CD8-positive, alpha-beta T cell (primary cell): ENCODE measurements at regions of chr17 and their contacts with region 1.

Region 1: DNA sequence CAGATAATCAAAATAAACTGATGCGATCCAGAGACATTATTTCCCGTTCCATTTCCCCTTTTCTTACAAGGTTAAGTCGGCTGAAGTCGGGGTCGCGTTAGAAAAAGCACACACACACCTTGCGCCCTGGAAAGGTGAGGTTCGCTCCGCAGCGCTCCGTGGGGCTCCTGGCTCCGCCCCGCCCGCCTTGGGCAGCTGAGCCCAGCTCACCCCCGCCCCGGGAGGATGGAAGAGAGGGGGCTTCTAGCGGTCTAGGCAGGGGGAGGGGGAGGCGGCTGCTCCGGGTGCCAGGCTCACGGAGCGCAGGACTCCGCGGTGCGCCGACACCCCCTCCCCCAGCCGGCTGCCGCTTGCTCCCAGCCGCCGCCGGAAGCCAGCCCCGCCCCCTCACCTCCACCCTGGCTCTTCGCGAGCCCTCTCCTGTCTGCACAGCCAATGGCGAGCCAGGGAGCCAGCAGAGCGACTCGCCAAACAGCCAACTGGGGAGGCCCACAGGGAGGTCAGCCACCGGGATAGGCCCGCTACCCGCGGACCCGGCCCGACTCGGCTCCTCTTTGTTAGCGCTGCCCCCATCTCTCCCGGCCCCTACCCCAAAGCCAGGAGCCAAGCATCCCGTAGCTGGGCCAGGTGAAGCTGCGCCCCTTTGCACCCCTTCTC is 30.4 kb downstream of the FAM222B start:
- DNase-seq: peak; percentile 90 to 98 (median 96)
- ATAC-seq: peak; percentile 96
- H3K4me3 ChIP-seq: peak overlapping the region; percentile 67 to 99
- H3K4me3 Mint-ChIP-seq: peak overlapping the region; percentile 94
- H3K27ac ChIP-seq: peak overlapping the region; percentile 93 to 96
- H3K27ac Mint-ChIP-seq: peak overlapping the region; percentile 93
- H3K4me1 ChIP-seq: peaks cover 18% of the 10 kb centered on the region
- H3K4me1 Mint-ChIP-seq: peaks cover 35% of the 10 kb centered on the region
- H3K27me3 ChIP-seq: no peaks in the 10 kb centered on the region
- H3K27me3 Mint-ChIP-seq: no peaks in the 10 kb centered on the region
- CTCF ChIP-seq: no peak

Region 2: DNA sequence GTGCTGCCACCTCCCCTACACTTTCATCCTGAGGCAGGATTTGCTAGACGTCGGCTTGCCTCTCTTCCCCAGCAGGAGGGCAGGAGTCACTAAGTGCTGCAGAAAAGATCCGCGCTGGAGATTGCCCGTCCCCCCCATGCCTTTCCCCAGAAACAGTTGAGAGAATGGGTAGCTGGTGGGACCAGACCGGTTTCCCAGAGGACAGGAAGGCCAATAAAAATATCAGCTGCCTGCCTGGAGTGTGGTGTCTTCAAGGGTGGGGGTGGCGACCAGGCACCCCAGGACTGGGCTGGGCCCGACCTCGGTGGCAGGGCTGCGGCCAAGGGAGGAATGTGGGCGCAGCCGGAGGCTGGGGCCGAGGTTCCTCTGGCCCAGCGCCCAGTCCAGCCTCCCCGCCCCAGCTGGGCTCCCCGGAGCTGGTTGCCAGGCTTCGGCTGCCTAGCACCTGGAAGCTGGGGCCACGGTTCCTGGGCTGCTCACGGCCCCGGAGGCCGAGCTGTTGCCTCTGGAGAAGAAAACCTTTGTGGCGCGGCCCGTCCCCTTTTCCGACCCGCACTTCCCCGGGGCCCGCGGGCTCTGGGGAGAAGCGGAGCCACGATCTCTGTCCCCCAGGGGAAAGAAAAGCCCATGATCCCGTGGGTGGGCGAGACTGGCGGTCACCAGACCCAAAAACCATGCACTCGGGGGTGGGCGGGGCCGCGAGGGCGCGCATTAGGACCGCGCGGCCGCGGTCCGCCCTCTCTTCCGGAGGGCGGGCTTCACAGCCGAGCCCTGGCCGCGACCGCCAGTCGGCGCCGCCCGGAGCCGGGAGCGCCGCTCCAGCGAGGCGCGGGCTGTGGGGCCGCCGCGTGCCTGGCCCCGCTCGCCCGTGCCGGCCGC is 68.8 kb before region 1 on chr17 and contains the start of gene TRAF4:
- CTCF ChIA-PET with region 1: no interaction called
- POLR2A ChIA-PET with region 1: no interaction called
- intact Hi-C with region 1: loop called in 1 of 2 experiments (anchors 1 kb)
- DNase-seq: peak; percentile 44 to 91 (median 74)
- ATAC-seq: peak; percentile 87
- H3K4me3 ChIP-seq: peak within 1 kb of the TSS; percentile 69 to 72
- H3K4me3 Mint-ChIP-seq: peak within 1 kb of the TSS; percentile 88
- H3K27ac ChIP-seq: peak within 1 kb of the TSS; percentile 62 to 82
- H3K27ac Mint-ChIP-seq: peak within 1 kb of the TSS; percentile 84
- H3K4me1 ChIP-seq: peaks cover 33% of the 10 kb centered on the region
- H3K4me1 Mint-ChIP-seq: peaks cover 28% of the 10 kb centered on the region
- H3K27me3 ChIP-seq: no peaks in the 10 kb centered on the region
- H3K27me3 Mint-ChIP-seq: no peaks in the 10 kb centered on the region
- CTCF ChIP-seq: no peak
- total RNA-seq, gene TRAF4: 418 to 439 TPM

Region 3: GRCh38 chr17:28842282-28843012 is 30.2 kb after region 1 on chr17 and contains the start of gene FAM222B:
- CTCF ChIA-PET with region 1: interaction called, 3 read pairs
- POLR2A ChIA-PET with region 1: interaction called, 3 read pairs
- intact Hi-C with region 1: loop called (anchors 1 kb)
- DNase-seq: peak; percentile 68 to 94 (median 83)
- ATAC-seq: peak; percentile 98
- H3K4me3 ChIP-seq: peak within 1 kb of the TSS; percentile 62 to 91
- H3K4me3 Mint-ChIP-seq: peak within 1 kb of the TSS; percentile 97
- H3K27ac ChIP-seq: peak within 1 kb of the TSS; percentile 65 to 79
- H3K27ac Mint-ChIP-seq: peak within 1 kb of the TSS; percentile 94
- H3K4me1 ChIP-seq: peaks cover 16% of the 10 kb centered on the region
- H3K4me1 Mint-ChIP-seq: peaks cover 25% of the 10 kb centered on the region
- H3K27me3 ChIP-seq: no peaks in the 10 kb centered on the region
- H3K27me3 Mint-ChIP-seq: no peaks in the 10 kb centered on the region
- CTCF ChIP-seq: no peak
- total RNA-seq, gene FAM222B: 20.2 to 20.6 TPM

Region 4: DNA sequence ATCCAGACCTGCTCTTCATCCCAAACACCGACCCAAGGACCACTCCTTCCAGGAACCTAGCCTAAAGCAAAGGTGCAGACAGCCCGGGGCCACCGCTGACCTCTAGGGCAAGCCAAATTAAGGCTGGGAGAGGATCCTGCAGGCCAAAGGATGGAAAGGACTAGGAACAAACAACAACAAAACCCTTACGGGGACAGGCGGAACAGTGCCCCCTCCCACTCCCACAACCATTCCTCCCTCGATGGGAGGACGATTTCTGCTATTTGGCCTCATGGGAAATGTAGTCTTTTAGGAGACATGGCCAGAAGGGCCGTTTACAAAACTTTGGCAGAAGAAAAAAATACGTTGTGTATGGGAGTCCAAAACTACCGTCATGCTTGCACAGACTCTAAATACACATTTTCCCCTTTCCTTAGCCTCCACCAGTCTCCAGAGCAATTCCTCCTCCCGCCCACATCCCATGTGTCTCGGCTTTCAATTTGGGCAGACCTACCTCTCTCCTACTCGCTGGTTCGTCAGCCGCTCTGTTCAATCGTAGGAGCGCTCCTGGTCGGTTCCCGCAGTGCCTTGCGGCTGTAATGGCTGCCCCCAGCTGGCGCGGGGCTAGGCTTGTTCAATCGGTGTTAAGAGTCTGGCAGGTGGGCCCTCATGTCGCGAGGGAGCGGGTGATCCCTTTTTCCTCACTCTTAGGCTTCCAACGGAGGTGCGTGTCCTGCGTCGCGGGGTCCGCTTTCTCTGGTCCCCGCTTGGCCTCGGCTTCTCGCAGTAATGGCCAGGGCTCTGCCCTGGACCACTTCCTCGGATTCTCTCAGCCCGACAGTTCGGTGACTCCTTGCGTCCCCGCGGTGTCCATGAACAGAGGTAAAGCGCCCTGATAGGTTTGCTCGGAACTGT is 42.5 kb after region 1 on chr17 and contains the start of gene ERAL1:
- CTCF ChIA-PET with region 1: no interaction called
- POLR2A ChIA-PET with region 1: no interaction called
- intact Hi-C with region 1: loop called (anchors 1 to 2 kb)
- DNase-seq: peak; percentile 62 to 90 (median 84)
- ATAC-seq: peak; percentile 99
- H3K4me3 ChIP-seq: peak within 1 kb of the TSS; percentile 75 to 96
- H3K4me3 Mint-ChIP-seq: peak within 1 kb of the TSS; percentile 95
- H3K27ac ChIP-seq: peak within 1 kb of the TSS; percentile 61 to 74
- H3K27ac Mint-ChIP-seq: peak within 1 kb of the TSS; percentile 90
- H3K4me1 ChIP-seq: peaks cover 12% of the 10 kb centered on the region
- H3K4me1 Mint-ChIP-seq: peaks cover 18% of the 10 kb centered on the region
- H3K27me3 ChIP-seq: no peaks in the 10 kb centered on the region
- H3K27me3 Mint-ChIP-seq: no peaks in the 10 kb centered on the region
- CTCF ChIP-seq: no peak
- total RNA-seq, gene ERAL1: 20.0 to 21.2 TPM